SK-N-SH (cell line): ENCODE measurements at regions of chr6 and their contacts with region 1.

Region 1: DNA sequence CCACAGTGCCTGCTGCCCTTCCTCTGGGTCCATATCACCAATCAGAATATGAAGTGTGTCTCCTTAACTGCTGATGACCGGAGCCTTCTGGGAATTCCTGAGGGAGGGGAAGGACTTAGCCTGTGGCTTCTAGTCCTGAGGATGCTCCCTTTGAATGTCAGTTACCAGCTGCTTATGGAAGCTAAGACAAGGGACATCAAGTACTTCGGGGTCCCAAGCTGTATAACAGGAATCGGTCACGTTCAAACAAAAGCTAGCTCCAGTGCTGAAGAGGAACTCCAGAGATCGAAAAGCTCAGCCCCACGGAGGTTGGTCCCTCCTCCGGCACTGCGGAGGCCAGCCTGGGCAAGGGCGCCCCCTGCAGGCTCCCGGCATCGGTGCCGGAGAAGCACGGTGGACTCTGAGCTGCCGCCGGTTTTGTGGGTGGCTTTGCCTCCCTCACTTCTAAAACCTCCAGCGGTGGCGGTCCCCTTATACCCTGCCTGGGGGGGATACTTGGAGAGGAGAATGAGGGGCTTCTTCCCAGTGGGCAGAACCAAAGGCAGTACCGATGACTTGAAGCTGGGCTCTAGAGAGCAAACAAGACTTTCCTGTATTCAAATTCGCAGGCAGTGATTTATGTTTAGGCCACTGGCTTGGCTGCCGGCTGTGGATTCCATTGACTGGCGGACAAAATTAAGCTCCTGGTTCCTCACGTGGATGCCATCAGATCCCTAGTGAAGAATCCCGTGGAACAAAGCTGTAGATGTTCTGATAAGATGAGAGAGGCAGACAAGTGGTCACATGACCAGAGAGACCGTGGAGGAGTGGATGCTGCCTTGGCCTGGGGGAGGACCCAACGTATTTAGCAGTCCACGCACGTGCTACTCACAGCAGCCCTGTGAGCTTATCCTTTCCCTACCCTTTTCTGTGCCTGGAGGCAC is 16.2 kb upstream of the UBR2 start:
- DNase-seq: peak; percentile 94
- H3K4me3 ChIP-seq: peak overlapping the region; percentile 46 to 65
- H3K27ac ChIP-seq: peak overlapping the region; percentile 59 to 72; a peak in 3 of 4 replicates
- H3K4me1 ChIP-seq: peaks cover 0 to 10% of the 10 kb centered on the region in 2 experiments; a peak in 1 of 4 replicates
- H3K27me3 ChIP-seq: no peaks in the 10 kb centered on the region
- CTCF ChIP-seq: peak; percentile 98
- EP300 ChIP-seq: no peak
- RAD21 ChIP-seq: peak; percentile 90

Region 2: DNA sequence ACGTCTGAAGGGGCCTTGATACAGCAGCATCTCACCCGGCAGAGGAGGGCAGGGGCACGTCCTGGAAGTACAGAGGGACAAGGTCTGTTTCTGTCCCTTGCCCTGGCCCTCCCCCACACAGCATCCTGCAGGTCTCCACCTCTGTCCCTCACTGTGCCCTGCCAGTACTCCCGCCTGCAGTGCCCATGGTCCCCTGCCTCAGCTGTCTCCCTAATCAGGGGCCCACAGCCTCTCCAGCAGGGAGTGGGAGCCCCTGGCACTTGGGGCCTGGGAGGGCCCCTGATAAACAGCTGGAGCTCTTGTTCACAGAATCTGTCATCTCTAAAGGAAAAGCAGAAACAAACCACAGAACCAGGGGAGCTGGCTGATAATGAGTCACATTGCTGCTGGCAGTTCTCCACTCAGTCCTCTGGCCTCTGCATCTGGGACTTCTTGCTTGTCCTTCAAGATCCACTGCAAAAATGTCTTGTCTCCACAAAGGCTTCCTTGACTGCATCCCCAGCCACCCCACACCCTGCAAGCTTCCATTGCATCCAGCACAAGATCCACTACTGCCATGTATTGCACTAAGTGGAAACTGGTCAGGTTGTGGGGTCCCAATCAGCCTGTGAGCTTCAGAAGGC is 530.5 kb before region 1 on chr6:
- CTCF ChIA-PET with region 1: no interaction called
- POLR2A ChIA-PET with region 1: no interaction called
- DNase-seq: peak; percentile 55
- H3K4me3 ChIP-seq: no peak overlapping the region
- H3K27ac ChIP-seq: peak overlapping the region; percentile 31 to 55; a peak in 3 of 4 replicates
- H3K4me1 ChIP-seq: peaks cover 8% of the 10 kb centered on the region in 2 experiments; a peak in 1 of 4 replicates
- H3K27me3 ChIP-seq: no peaks in the 10 kb centered on the region
- CTCF ChIP-seq: no peak
- EP300 ChIP-seq: peak; percentile 32 to 42; a peak in 1 of 4 replicates
- RAD21 ChIP-seq: no peak

Region 3: DNA sequence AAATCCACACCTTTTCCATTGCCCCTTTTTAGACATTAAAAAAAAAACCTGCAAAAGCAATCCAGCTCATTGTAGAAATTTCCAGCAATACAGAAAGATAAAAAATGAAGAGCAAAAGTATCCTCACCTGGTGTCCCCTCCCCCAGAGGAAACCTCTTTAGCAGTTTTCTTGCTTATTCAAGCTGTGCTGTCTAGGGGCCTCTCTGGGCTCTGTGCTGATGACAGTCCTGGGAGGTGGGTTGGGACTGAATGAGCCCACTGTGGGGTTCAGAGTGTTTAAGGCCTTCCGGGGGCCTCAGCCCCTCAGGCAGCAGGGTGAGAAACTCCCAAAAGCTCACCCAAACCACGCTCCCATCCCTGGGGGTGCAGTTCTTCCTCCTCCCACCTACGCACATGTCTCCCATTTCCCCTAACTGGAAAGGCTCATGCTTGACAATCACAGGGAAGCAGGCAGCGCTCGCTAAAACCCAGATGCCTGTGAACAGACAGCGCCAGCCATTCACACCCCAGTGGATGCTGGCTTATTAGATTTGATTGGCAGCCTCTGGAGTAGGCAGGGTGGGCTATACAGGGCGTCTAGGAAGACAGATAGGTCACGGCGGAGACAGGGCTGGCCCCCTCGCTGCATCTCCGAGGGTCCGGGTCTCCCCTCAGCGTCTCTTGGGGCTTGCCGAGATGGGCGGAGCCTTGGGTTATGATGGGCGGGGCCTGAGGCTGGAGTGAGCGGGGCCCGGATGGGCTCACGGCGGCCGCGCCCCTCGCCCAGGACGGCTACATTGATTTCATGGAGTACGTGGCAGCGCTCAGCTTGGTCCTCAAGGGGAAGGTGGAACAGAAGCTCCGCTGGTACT is 369.9 kb before region 1 on chr6:
- CTCF ChIA-PET with region 1: interaction called, 15 read pairs
- POLR2A ChIA-PET with region 1: no interaction called
- DNase-seq: peak; percentile 88
- H3K4me3 ChIP-seq: peak overlapping the region in 1 of 2 experiments; percentile 44; a peak in 2 of 4 replicates
- H3K27ac ChIP-seq: peak overlapping the region in 1 of 2 experiments; percentile 36; a peak in 1 of 4 replicates
- H3K4me1 ChIP-seq: peaks cover 0 to 13% of the 10 kb centered on the region in 2 experiments; a peak in 1 of 4 replicates
- H3K27me3 ChIP-seq: no peaks in the 10 kb centered on the region
- CTCF ChIP-seq: no peak
- EP300 ChIP-seq: no peak; a peak in 1 of 4 replicates
- RAD21 ChIP-seq: no peak

Region 4: GRCh38 chr6:42260972-42261371 is 286.7 kb before region 1 on chr6:
- CTCF ChIA-PET with region 1: interaction called, 38 read pairs
- POLR2A ChIA-PET with region 1: no interaction called
- DNase-seq: peak; percentile 83
- H3K4me3 ChIP-seq: no peak overlapping the region
- H3K27ac ChIP-seq: no peak overlapping the region
- H3K4me1 ChIP-seq: peaks cover 0 to 4% of the 10 kb centered on the region in 2 experiments; a peak in 1 of 4 replicates
- H3K27me3 ChIP-seq: no peaks in the 10 kb centered on the region
- CTCF ChIP-seq: peak; percentile 57
- EP300 ChIP-seq: no peak
- RAD21 ChIP-seq: peak; percentile 54

Region 5: GRCh38 chr6:42313941-42314570 is 233.6 kb before region 1 on chr6:
- CTCF ChIA-PET with region 1: interaction called, 54 read pairs
- POLR2A ChIA-PET with region 1: no interaction called
- DNase-seq: no peak
- H3K4me3 ChIP-seq: no peak overlapping the region
- H3K27ac ChIP-seq: peak overlapping the region in 1 of 2 experiments; percentile 97; a peak in 2 of 4 replicates
- H3K4me1 ChIP-seq: peaks cover 0 to 26% of the 10 kb centered on the region in 2 experiments; a peak in 3 of 4 replicates
- H3K27me3 ChIP-seq: no peaks in the 10 kb centered on the region
- CTCF ChIP-seq: no peak
- EP300 ChIP-seq: no peak
- RAD21 ChIP-seq: no peak

Region 6: GRCh38 chr6:42453031-42453653 is 94.5 kb before region 1 on chr6:
- CTCF ChIA-PET with region 1: interaction called, 31 read pairs
- POLR2A ChIA-PET with region 1: interaction called, 6 read pairs
- DNase-seq: peak; percentile 92
- H3K4me3 ChIP-seq: peak overlapping the region; percentile 95 to 100
- H3K27ac ChIP-seq: peak overlapping the region; percentile 90 to 96
- H3K4me1 ChIP-seq: peaks cover 8 to 17% of the 10 kb centered on the region in 2 experiments; a peak in 3 of 4 replicates
- H3K27me3 ChIP-seq: no peaks in the 10 kb centered on the region
- CTCF ChIP-seq: no peak
- EP300 ChIP-seq: no peak; a peak in 2 of 4 replicates
- RAD21 ChIP-seq: no peak

Region 7: GRCh38 chr6:42532038-42532669 is 15.5 kb before region 1 on chr6:
- CTCF ChIA-PET with region 1: interaction called, 58 read pairs
- POLR2A ChIA-PET with region 1: no interaction called
- DNase-seq: peak; percentile 70
- H3K4me3 ChIP-seq: no peak overlapping the region; a peak in 1 of 4 replicates
- H3K27ac ChIP-seq: no peak overlapping the region
- H3K4me1 ChIP-seq: no peaks in the 10 kb centered on the region
- H3K27me3 ChIP-seq: no peaks in the 10 kb centered on the region
- CTCF ChIP-seq: peak; percentile 91
- EP300 ChIP-seq: no peak
- RAD21 ChIP-seq: peak; percentile 82

Region 8: GRCh38 chr6:42704241-42704936 is 156.7 kb after region 1 on chr6:
- CTCF ChIA-PET with region 1: no interaction called
- POLR2A ChIA-PET with region 1: no interaction called
- DNase-seq: no peak
- H3K4me3 ChIP-seq: no peak overlapping the region
- H3K27ac ChIP-seq: no peak overlapping the region
- H3K4me1 ChIP-seq: no peaks in the 10 kb centered on the region
- H3K27me3 ChIP-seq: no peaks in the 10 kb centered on the region
- CTCF ChIP-seq: no peak
- EP300 ChIP-seq: no peak
- RAD21 ChIP-seq: no peak